Dendritic cell treated with granulocyte-macrophage colony-stimulating factor and Interleukin-4, amounts not matched to agents 40 ng/mL and 50 ng/mL, for 4 days (primary cell): ENCODE measurements at regions of chr12 and their contacts with region 1.

Region 1: DNA sequence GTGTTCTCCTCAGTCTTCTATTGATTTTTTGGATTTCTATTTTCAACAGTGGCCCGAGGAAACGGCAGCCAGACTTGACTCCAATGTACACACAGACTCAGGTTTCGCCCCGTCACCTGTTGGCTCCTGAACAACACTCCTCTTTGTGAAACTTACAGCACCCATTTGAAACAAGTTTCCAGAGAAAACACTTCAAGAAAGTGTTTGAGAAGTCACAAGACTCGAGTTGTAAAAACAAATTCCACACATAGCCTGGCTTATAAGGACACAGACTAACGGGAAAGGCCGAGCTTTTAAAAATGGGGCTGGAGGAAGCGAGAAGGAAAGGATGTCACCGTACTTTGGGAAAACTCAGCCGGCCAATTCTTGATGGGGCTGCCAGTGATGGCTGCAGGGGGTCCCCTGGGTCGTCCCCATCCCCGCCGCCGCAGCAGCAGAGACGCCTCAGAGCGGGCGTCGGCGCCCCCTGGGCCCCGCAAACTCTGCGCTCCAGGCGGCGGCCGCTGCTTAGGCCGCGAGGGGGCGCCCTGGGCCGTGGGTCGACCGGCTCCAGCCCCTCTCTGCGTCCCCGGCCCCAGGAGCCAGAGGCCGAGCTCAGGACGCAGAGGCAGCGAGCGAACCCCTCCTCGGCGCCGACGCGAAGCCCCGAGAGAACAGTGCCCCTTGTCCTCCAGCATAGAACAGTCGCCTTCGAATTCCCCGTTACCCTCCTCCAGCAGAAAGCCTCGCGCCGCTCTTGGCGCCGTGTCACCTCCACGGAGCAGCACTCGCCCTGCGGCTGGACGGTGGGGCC is 106.9 kb downstream of the PRICKLE1 start:
- H3K4me3 Mint-ChIP-seq: peak overlapping the region; percentile 90
- H3K27ac Mint-ChIP-seq: no peak overlapping the region
- H3K4me1 Mint-ChIP-seq: peaks cover 8% of the 10 kb centered on the region
- H3K27me3 Mint-ChIP-seq: peaks cover 81% of the 10 kb centered on the region

Region 2: GRCh38 chr12:42568952-42569915 is 86.6 kb after region 1 on chr12:
- intact Hi-C with region 1: loop called (anchors 2 kb)
- H3K4me3 Mint-ChIP-seq: no peak overlapping the region
- H3K27ac Mint-ChIP-seq: no peak overlapping the region
- H3K4me1 Mint-ChIP-seq: no peaks in the 10 kb centered on the region
- H3K27me3 Mint-ChIP-seq: peaks cover 1% of the 10 kb centered on the region

Region 3: DNA sequence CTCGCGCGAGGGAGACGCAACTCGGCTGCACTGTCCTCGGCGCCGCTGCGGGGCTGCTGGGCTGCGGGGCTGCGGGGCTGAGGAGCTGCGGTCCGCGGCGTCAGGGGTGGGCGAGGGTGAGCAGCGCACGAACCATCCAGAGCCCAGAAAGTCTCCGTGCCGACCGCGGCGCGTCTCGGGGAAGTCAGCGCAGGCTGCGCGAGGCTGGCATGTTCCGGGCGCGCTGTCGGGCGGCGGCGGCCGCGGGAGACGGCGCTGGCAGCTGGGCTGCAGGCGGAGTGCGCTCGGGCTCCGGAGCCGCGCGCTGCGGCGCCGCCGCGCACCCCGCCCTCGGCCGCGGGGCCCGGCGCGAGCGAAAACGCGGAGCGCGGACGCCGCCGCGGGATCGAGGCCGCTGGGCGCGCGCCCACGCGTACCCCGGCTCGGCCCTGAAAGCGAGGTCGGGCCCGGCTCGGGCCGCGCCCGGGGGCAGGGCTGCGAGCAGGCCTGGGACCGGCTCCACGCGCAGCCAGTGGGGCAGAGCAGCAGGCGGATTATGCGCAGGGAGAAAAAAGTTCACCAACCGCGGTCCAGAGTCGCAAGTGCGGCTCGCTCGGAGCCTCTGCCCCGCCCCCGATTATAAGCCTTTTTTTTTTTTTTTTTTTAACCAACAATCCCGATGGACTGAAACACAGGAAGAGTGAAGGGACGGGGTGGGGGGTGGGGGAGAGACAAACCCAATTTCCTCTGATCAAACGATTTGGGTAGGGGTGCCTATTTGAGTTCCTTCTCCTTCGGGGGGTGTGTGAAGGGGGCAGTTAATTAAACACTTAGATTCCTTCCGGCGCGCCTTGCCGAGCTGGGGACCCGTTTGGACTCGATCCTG is 107.1 kb after region 1 on chr12 and contains the start of gene PRICKLE1:
- intact Hi-C with region 1: loop called (anchors 5 kb)
- H3K4me3 Mint-ChIP-seq: peak within 1 kb of the TSS; percentile 75
- H3K27ac Mint-ChIP-seq: peak within 1 kb of the TSS; percentile 44
- H3K4me1 Mint-ChIP-seq: peaks cover 20% of the 10 kb centered on the region
- H3K27me3 Mint-ChIP-seq: peaks cover 74% of the 10 kb centered on the region

Region 4: DNA sequence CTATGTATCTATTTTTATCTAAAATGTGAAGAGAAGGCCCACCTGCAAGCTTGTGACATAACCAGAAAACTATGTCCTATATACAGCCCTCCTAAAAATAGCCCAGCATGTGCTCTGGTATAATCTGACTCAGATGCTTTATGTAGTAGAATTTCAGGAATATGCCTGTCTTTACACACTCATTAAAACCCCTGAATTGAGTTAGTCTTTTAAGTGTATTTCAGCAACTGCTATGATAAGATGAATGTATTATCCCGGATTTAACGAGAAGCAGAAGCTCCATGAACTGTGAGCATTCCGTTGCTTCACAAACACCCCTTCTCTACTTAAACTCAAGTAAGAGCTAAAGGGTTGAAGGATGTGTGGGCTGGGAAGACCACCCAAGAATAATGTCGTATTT is 196.8 kb after region 1 on chr12:
- intact Hi-C with region 1: no loop called
- H3K4me3 Mint-ChIP-seq: no peak overlapping the region
- H3K27ac Mint-ChIP-seq: no peak overlapping the region
- H3K4me1 Mint-ChIP-seq: no peaks in the 10 kb centered on the region
- H3K27me3 Mint-ChIP-seq: no peaks in the 10 kb centered on the region

Region 5: GRCh38 chr12:43282106-43282505 is 799.5 kb after region 1 on chr12:
- intact Hi-C with region 1: loop called (anchors 5 kb)
- H3K4me3 Mint-ChIP-seq: no peak overlapping the region
- H3K27ac Mint-ChIP-seq: no peak overlapping the region
- H3K4me1 Mint-ChIP-seq: no peaks in the 10 kb centered on the region
- H3K27me3 Mint-ChIP-seq: no peaks in the 10 kb centered on the region

Region 6: GRCh38 chr12:43338848-43339526 is 856.3 kb after region 1 on chr12:
- intact Hi-C with region 1: loop called (anchors 5 kb)
- H3K4me3 Mint-ChIP-seq: no peak overlapping the region
- H3K27ac Mint-ChIP-seq: no peak overlapping the region
- H3K4me1 Mint-ChIP-seq: no peaks in the 10 kb centered on the region
- H3K27me3 Mint-ChIP-seq: no peaks in the 10 kb centered on the region